Activated CD4-positive, alpha-beta T cell treated with anti-CD3 and anti-CD28 coated beads, Interleukin-2, amount 10 ng/mL, durations not matched to agents 7 days and 5 days (primary cell): ENCODE measurements at regions of chr5 and their contacts with region 1.

Region 1: GRCh38 chr5:50694027-50694590 is 27.7 kb downstream of the PARP8 start:
- DNase-seq: no peak
- H3K4me3 Mint-ChIP-seq: no peak overlapping the region
- H3K27ac Mint-ChIP-seq: no peak overlapping the region
- H3K4me1 Mint-ChIP-seq: peaks cover 34% of the 10 kb centered on the region
- H3K27me3 Mint-ChIP-seq: no peaks in the 10 kb centered on the region

Region 2: DNA sequence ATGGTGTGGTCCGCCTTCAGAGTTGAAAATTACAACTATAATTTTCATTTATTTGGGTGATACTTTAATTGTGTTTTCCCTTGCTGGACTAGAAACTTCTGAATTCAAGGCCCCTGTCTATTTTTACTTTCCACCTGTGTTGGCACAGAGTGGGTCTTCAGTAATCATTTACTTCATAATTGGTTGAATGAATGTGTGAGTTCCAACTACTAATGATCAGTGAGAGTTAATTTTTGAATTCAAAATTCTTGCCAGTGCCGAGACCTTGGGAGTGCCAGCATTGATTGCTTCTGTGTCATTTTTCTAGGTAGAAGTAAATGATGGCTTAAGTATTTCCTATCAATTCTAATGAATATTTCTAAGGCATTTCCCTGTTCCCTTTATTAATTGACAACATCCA is 33.7 kb after region 1 on chr5:
- CTCF ChIA-PET with region 1: no interaction called
- POLR2A ChIA-PET with region 1: interaction called, 11 read pairs
- DNase-seq: no peak
- H3K4me3 Mint-ChIP-seq: no peak overlapping the region
- H3K27ac Mint-ChIP-seq: no peak overlapping the region
- H3K4me1 Mint-ChIP-seq: peaks cover 36% of the 10 kb centered on the region
- H3K27me3 Mint-ChIP-seq: no peaks in the 10 kb centered on the region

Region 3: GRCh38 chr5:51104556-51104955 is 410.4 kb after region 1 on chr5:
- CTCF ChIA-PET with region 1: no interaction called
- POLR2A ChIA-PET with region 1: no interaction called
- DNase-seq: no peak
- H3K4me3 Mint-ChIP-seq: no peak overlapping the region
- H3K27ac Mint-ChIP-seq: no peak overlapping the region
- H3K4me1 Mint-ChIP-seq: no peaks in the 10 kb centered on the region
- H3K27me3 Mint-ChIP-seq: no peaks in the 10 kb centered on the region